Heart left ventricle (tissue), 16 donors: ENCODE measurements at regions of chr1 and their contacts with region 1.

Region 1: GRCh38 chr1:32247983-32248889 is 1.2 kb downstream of the FAM167B start:
- DNase-seq: peak; percentile 80 to 94 (median 88)
- ATAC-seq: peak in 3 of 4 donors; percentile 34 to 81 (median 56)
- H3K4me3 ChIP-seq: peak overlapping the region in 8 of 12 donors; percentile 20 to 39 (median 30)
- H3K27ac ChIP-seq: peak overlapping the region; percentile 49 to 95 (median 82)
- H3K4me1 ChIP-seq: peaks cover 0 to 74% (median 65%) of the 10 kb centered on the region in 12 donors
- H3K27me3 ChIP-seq: no peaks in the 10 kb centered on the region
- CTCF ChIP-seq: peak; percentile 71 to 86 (median 78)
- POLR2A ChIP-seq: no peak

Region 2: DNA sequence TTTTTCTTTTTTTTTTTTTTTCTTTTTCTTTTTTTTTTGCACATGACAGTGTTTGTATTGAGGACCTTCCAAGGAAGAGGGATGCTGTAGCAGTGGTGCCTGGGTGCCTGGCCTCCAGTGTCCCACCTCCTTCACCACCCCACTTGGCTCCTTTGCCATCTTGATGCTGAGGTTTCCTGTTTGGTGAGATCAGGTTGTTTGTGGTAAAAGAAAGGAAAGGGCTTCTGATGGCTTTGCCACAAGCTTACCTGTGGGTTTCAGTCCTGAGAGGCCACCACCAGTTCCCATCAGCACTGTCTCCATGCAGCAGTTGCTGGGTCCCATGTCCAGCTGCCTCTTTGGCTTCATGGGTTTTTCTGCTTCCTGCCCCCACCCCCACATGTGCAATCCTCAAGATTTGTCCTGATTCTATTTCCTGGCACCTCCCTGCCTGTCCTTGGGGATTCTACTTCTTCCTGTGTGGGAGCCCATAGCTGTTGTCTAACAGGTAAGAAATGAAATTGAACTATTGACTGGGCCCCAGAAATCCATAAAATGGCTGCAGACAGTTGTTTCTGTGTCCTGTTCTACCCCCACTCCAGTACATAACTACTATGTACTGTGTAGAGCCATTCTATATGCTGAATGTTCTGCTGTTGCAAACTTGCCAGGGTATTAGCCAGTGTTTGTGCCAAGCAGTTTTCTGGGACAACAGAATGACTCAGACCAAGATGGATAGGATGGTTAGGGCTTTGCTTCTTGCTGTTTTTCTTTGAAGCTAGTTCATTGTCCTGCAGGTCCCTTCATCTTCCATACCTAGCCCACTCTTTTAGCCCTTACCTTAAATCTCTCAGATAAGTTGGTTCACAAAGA is 52.0 kb before region 1 on chr1:
- intact Hi-C with region 1: no loop called
- DNase-seq: no peak
- ATAC-seq: no peak
- H3K4me3 ChIP-seq: no peak overlapping the region
- H3K27ac ChIP-seq: peak overlapping the region in 1 of 12 donors; percentile 9
- H3K4me1 ChIP-seq: peaks cover 0 to 39% (median 15%) of the 10 kb centered on the region in 12 donors
- H3K27me3 ChIP-seq: no peaks in the 10 kb centered on the region
- CTCF ChIP-seq: no peak
- POLR2A ChIP-seq: no peak

Region 3: DNA sequence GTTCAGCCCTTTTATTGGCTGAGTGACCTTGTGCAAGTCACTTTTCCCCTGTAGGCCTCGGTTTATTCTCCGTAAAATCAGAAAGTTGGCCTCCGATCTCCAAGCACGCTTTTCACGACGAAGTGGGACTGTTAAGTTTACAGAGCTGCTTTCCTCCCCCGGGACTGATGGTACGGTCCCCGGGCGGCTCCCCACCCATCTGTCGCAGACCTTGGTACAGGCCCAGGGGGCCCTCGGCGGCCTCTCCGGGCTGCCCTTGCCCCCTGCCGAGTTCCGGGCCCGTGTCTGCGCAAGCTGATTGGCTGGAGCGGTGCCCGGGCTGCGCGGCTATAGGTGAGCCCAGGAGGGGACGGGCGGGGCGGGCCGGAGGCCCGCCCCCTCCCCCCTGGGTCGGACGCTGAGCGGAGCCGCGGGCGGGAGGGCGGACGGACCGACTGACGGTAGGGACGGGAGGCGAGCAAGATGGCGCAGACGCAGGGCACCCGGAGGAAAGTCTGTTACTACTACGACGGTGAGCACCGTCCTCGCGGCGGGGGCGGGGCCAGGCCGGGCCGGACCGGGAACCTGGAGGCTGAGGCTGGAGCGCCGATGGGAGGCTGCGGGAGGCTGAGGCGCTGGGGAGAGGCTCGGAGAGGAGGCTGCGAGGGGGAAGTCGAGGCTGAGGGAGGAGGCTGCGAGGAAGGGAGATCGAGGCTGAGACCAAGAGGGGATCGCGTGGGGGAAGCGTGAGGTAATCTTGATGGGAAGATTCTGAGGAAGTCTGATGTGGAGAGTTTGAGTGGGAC is 43.7 kb after region 1 on chr1 and contains the start of gene HDAC1:
- intact Hi-C with region 1: loop called in 4 of 10 experiments (anchors 2 to 5 kb)
- DNase-seq: peak; percentile 96 to 99 (median 98)
- ATAC-seq: peak; percentile 98 to 99 (median 99)
- H3K4me3 ChIP-seq: peak within 1 kb of the TSS; percentile 50 to 92 (median 72)
- H3K27ac ChIP-seq: peak within 1 kb of the TSS; percentile 61 to 93 (median 82)
- H3K4me1 ChIP-seq: peaks cover 0 to 34% (median 12%) of the 10 kb centered on the region in 12 donors
- H3K27me3 ChIP-seq: no peaks in the 10 kb centered on the region
- CTCF ChIP-seq: peak in 1 of 12 donors; percentile 5
- POLR2A ChIP-seq: peak in 1 of 2 donors; percentile 51
- total RNA-seq, gene HDAC1: 22.0 to 46.6 (median 29.3) TPM

Region 4: DNA sequence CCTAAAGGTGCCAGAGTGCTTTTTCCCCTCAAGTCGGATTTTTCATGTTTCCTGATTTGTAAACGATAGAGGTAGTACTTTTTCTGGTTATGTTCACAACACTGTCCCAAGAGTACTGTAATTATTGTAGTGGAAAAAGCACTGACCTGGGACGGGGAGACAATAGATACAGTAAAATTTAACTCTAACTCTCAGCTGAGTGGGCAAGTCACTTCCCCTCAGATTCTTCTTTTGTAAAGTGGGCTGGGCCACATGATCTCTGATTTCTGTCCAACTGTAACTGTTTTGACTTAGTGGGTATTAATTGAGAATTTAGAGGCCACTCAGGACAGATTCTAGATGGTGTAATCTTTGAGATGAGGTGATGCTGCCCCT is 68.7 kb after region 1 on chr1:
- intact Hi-C with region 1: loop called in 4 of 10 experiments (anchors 5 to 10 kb)
- DNase-seq: no peak
- ATAC-seq: no peak
- H3K4me3 ChIP-seq: no peak overlapping the region
- H3K27ac ChIP-seq: no peak overlapping the region
- H3K4me1 ChIP-seq: peaks cover 0 to 14% (median 6%) of the 10 kb centered on the region in 12 donors
- H3K27me3 ChIP-seq: no peaks in the 10 kb centered on the region
- CTCF ChIP-seq: no peak
- POLR2A ChIP-seq: no peak

Region 5: DNA sequence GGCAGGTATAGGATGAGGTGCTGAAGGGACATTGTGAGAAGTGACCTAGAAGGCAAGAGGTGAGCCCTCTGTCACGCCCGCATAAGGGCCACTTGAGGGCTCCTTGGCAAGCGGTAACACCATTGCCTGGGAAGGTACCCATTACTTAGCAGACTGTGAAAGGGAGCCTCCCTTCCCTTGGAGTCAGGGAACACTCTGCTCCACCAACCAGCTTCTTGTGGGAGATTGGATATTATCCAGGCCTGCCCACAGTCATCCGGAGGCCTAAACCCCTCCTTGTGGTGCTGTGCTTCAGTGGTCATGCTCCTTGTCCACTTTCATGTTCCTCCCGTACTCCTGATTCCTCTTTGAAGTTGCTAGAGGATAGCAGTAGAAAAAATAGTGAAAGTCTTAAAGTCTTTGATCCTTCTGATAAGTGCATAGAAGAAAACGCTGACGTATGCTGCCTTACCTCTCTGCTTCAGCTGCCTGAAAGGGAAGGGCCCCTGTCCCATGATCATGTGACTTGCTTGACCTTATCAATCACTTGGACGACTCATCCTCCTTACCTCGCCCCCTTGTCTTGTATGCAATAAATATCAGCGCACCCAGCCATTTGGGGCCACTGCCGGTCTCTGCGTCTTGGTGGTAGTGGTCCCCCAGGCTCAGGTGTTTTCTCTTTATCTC is 418.8 kb after region 1 on chr1:
- intact Hi-C with region 1: no loop called
- DNase-seq: no peak
- ATAC-seq: no peak
- H3K4me3 ChIP-seq: no peak overlapping the region
- H3K27ac ChIP-seq: no peak overlapping the region
- H3K4me1 ChIP-seq: peaks cover 0 to 12% (median 0%) of the 10 kb centered on the region in 12 donors
- H3K27me3 ChIP-seq: no peaks in the 10 kb centered on the region
- CTCF ChIP-seq: no peak
- POLR2A ChIP-seq: no peak